ENCODE measurements at regions of chr7 and their contacts with region 1.

Region 1: DNA sequence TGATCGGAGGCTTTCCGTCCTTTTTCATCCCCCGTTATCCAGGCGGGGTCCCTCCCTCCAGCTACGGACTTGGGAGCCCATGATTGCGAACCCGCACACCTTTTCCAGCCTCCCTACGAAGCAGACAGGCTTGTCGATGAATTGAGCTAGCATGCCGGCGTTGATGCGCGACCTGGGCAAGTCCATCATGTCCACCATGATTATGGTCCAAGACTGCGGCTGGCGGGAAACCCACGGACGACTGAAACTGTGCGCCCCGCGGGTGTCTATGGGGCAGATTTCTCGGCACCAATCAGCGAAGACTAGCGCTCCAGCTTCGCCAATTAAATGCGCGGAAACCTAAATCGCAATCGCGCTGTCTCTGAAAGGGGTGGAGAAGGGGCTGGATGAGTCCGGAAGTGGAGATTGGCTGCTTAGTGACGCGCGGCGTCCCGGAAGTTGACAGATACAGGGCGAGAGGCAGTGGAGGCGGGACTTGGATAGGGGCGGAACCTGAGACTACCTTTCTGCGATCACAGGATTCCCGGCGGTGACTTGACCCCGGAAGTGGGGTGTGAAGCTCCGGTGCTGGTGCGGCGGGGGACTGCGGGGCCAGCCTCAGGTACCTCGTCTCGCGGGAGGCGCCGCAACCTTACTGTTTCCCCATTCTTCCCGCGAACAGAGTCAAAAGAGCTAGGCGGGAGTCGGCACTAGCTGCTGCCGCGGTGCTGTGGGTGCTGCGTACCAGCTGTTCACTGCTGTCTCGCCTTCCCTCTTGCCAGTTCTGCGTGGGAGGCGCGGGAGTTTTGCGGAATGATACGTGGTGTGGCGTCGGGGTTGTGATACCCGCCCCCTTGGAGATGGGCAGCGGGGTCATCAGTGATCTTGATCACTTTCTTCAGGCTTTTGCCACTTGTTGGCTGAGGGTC is at the start of gene UMAD1:
- DNase-seq: peak; percentile 87 to 99 (median 99)
- ATAC-seq: peak; percentile 87 to 88
- H3K4me3 Mint-ChIP-seq: peak within 1 kb of the TSS; percentile 90 to 99 (median 97)
- H3K27ac Mint-ChIP-seq: peak within 1 kb of the TSS; percentile 94 to 100 (median 98)
- H3K4me1 Mint-ChIP-seq: peaks cover 16 to 55% (median 50%) of the 10 kb centered on the region in 4 donors
- H3K27me3 Mint-ChIP-seq: no peaks in the 10 kb centered on the region
- polyA plus RNA-seq, gene UMAD1: 25.9 to 35.5 (median 27.4) TPM

Region 2: DNA sequence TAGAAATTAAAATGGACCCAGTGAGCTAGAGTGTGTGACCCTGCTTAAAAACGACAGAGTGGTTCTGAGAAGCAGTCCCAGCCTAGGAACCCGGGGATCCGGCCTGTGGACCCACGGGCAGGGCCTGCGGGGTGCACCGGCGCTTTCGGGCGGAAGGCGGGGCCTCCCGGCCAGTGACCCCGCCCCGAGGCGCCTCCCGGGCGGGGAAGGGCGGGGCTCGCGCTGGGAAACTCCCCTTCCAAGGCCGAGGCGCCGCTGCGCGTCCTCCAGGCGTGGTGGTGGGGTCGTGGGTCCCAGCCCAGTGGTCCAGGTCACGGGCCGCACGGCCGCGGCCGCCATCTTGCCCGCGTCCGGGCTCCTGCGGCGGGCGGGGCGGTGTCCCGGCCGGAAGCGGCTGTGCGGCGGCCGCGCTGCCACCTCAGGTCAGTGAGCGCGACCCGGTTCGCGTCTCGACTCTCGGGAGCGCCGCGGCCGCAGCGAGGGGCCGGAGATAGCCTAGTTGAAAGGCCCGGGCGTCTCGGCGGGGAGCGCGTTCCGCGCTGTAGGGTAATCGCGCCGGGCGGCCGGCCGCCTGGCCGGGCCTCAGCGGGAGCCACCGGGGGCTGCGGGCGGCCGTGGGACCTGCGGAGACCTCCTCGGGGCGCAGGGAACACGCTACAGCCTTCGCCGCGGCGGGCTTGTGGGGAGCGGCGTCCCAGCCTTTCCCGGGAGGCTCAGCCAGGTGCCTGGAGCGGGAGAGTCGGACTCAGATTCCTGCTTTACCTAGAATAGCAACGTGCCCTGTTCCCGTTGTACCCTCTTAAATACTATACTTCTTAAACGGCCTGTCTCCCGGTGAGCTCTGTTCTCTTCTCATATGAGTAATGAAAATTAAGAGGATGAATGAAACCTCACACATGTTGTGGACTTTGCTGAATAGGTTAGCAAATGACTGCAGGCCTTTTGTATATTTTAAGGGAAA is 73.5 kb before region 1 on chr7 and contains the start of gene MIOS:
- POLR2A ChIA-PET with region 1: interaction called, 10 read pairs
- DNase-seq: peak; percentile 73 to 88 (median 83)
- ATAC-seq: peak; percentile 87
- H3K4me3 Mint-ChIP-seq: peak within 1 kb of the TSS in 9 of 10 donors; percentile 76 to 90 (median 83)
- H3K27ac Mint-ChIP-seq: peak within 1 kb of the TSS; percentile 77 to 91 (median 89)
- H3K4me1 Mint-ChIP-seq: peaks cover 16 to 38% (median 35%) of the 10 kb centered on the region in 4 donors
- H3K27me3 Mint-ChIP-seq: no peaks in the 10 kb centered on the region
- polyA plus RNA-seq, gene MIOS: 15.6 to 23.5 (median 19.7) TPM

Region 3: GRCh38 chr7:7585253-7585928 is 55.1 kb before region 1 on chr7:
- POLR2A ChIA-PET with region 1: no interaction called
- DNase-seq: no peak
- ATAC-seq: no peak
- H3K4me3 Mint-ChIP-seq: no peak overlapping the region
- H3K27ac Mint-ChIP-seq: no peak overlapping the region
- H3K4me1 Mint-ChIP-seq: peaks cover 3 to 7% (median 4%) of the 10 kb centered on the region in 4 donors
- H3K27me3 Mint-ChIP-seq: no peaks in the 10 kb centered on the region

Region 4: GRCh38 chr7:7651479-7651878 is 11.0 kb after region 1 on chr7:
- POLR2A ChIA-PET with region 1: interaction called, 10 read pairs
- DNase-seq: no peak
- ATAC-seq: no peak
- H3K4me3 Mint-ChIP-seq: no peak overlapping the region
- H3K27ac Mint-ChIP-seq: peak overlapping the region in 8 of 10 donors; percentile 11 to 75 (median 32)
- H3K4me1 Mint-ChIP-seq: peaks cover 29 to 57% (median 50%) of the 10 kb centered on the region in 4 donors
- H3K27me3 Mint-ChIP-seq: no peaks in the 10 kb centered on the region

Region 5: DNA sequence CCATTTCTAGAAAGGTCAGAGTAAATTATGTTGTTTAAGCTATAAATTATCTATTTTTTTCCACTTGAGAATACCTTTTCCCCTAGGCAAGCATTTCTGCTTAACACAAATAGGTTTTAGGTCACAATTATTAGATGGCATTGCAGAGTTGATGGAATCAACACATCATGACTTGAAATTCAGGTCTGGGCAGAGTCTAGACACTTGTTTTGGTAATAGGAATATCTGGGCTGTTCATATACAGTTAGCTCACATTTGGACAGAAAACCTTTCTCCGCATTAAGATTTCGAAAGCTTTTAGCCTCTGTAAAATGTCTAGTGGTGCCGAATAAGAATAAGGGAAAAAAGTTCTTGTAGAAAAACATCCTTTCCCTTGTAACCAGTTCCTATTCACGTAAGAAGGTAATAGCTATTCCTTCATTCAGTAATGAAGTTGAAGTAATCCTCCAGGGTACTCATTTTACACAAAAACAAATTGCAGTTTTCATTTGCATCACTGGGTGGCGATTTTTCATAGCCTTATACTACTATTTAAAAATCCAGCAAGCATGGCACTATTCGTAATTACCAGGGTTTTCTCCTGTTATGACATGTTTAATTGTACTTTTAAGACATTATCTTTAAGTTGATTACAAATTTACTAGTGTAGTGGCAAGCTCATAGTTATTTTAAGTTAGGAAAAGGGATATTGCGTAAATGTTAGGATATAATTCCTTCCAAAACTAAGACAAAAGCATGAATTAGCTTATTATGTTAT is 40.9 kb after region 1 on chr7:
- POLR2A ChIA-PET with region 1: interaction called, 12 read pairs
- DNase-seq: peak in 7 of 10 donors; percentile 31 to 60 (median 39)
- ATAC-seq: peak; percentile 82 to 86
- H3K4me3 Mint-ChIP-seq: peak overlapping the region in 3 of 10 donors; percentile 1 to 42 (median 5)
- H3K27ac Mint-ChIP-seq: peak overlapping the region in 6 of 10 donors; percentile 13 to 75 (median 60)
- H3K4me1 Mint-ChIP-seq: peaks cover 17 to 37% (median 26%) of the 10 kb centered on the region in 4 donors
- H3K27me3 Mint-ChIP-seq: no peaks in the 10 kb centered on the region

Measured in naive thymus-derived CD8-positive, alpha-beta T cell (primary cell).